Endothelial cell of umbilical vein (primary cell): ENCODE measurements at regions of chr12 and their contacts with region 1.

Region 1: GRCh38 chr12:44972746-44973421 is 78.0 kb downstream of the DBX2 start:
- DNase-seq: peak; percentile 5
- H3K4me3 ChIP-seq: no peak overlapping the region
- H3K27ac ChIP-seq: no peak overlapping the region
- H3K4me1 ChIP-seq: no peaks in the 10 kb centered on the region
- H3K27me3 ChIP-seq: no peaks in the 10 kb centered on the region
- CTCF ChIP-seq: peak; percentile 9 to 58
- POLR2A ChIP-seq: no peak

Region 2: DNA sequence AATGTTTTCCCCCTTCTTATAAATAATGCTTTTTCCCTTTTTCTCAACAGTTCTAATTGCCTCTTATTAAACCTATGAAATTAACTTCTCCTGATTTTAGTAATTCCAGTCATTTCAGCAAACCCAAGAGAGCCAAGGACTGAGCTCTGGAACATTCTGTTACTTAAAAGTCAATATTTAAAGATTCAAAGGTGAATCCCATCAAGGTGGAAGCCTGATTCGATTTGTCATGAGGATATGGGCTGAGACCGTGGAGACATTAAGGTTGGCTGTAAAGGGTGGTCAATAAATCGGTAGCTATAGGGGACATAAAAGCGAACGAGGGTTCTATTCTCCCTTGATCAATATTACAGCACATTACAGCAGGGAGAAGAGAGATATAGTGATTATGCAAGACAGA is 30.2 kb before region 1 on chr12:
- CTCF ChIA-PET with region 1: no interaction called
- POLR2A ChIA-PET with region 1: no interaction called
- dilution Hi-C with region 1: no loop called
- intact Hi-C with region 1: no loop called
- DNase-seq: no peak
- H3K4me3 ChIP-seq: no peak overlapping the region
- H3K27ac ChIP-seq: no peak overlapping the region
- H3K4me1 ChIP-seq: no peaks in the 10 kb centered on the region
- H3K27me3 ChIP-seq: peaks cover 0 to 13% of the 10 kb centered on the region in 2 experiments
- CTCF ChIP-seq: no peak
- POLR2A ChIP-seq: no peak

Region 3: GRCh38 chr12:45122768-45123380 is 150.0 kb after region 1 on chr12:
- CTCF ChIA-PET with region 1: interaction called, 7 read pairs
- POLR2A ChIA-PET with region 1: no interaction called
- dilution Hi-C with region 1: no loop called
- intact Hi-C with region 1: loop called (anchors 2 kb)
- DNase-seq: peak; percentile 13
- H3K4me3 ChIP-seq: no peak overlapping the region
- H3K27ac ChIP-seq: no peak overlapping the region
- H3K4me1 ChIP-seq: no peaks in the 10 kb centered on the region
- H3K27me3 ChIP-seq: peaks cover under 1 to 17% of the 10 kb centered on the region in 2 experiments
- CTCF ChIP-seq: peak in 1 of 2 donors; percentile 1
- POLR2A ChIP-seq: no peak